CD8-positive, alpha-beta T cell (primary cell): ENCODE measurements at regions of chr18 and their contacts with region 1.

Region 1: GRCh38 chr18:37714691-37715090 is 149.1 kb upstream of the CELF4 start:
- DNase-seq: no peak
- ATAC-seq: no peak
- H3K4me3 ChIP-seq: no peak overlapping the region
- H3K4me3 Mint-ChIP-seq: no peak overlapping the region
- H3K27ac ChIP-seq: no peak overlapping the region
- H3K27ac Mint-ChIP-seq: no peak overlapping the region
- H3K4me1 ChIP-seq: no peaks in the 10 kb centered on the region
- H3K4me1 Mint-ChIP-seq: no peaks in the 10 kb centered on the region
- H3K27me3 ChIP-seq: no peaks in the 10 kb centered on the region
- H3K27me3 Mint-ChIP-seq: no peaks in the 10 kb centered on the region
- CTCF ChIP-seq: no peak

Region 2: GRCh38 chr18:37508207-37508606 is 206.5 kb before region 1 on chr18:
- CTCF ChIA-PET with region 1: no interaction called
- POLR2A ChIA-PET with region 1: no interaction called
- intact Hi-C with region 1: loop called in 1 of 2 experiments (anchors 5 kb)
- DNase-seq: no peak
- ATAC-seq: no peak
- H3K4me3 ChIP-seq: no peak overlapping the region
- H3K4me3 Mint-ChIP-seq: no peak overlapping the region
- H3K27ac ChIP-seq: no peak overlapping the region
- H3K27ac Mint-ChIP-seq: no peak overlapping the region
- H3K4me1 ChIP-seq: no peaks in the 10 kb centered on the region
- H3K4me1 Mint-ChIP-seq: no peaks in the 10 kb centered on the region
- H3K27me3 ChIP-seq: no peaks in the 10 kb centered on the region
- H3K27me3 Mint-ChIP-seq: no peaks in the 10 kb centered on the region
- CTCF ChIP-seq: no peak

Region 3: DNA sequence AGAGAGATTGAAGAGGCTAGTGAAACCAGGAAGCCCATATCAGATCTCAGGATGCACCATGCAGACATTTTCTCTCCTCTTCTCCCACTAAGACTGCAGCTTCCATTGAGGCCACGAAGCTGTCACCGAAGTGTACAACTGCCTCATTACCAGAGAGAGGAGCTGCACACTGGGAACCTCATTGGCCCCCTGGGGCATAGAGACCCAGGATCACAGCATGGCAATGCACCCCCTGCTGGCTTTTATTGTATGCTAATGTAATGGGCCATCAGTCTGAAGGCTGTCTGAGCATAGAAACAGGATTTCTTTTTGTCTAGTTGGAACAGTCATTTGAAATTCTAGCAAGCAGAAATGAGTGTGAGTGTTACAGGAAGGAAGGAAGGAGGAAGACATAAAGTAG is 712.5 kb after region 1 on chr18:
- CTCF ChIA-PET with region 1: no interaction called
- POLR2A ChIA-PET with region 1: no interaction called
- intact Hi-C with region 1: no loop called
- DNase-seq: no peak
- ATAC-seq: no peak
- H3K4me3 ChIP-seq: no peak overlapping the region
- H3K4me3 Mint-ChIP-seq: no peak overlapping the region
- H3K27ac ChIP-seq: no peak overlapping the region
- H3K27ac Mint-ChIP-seq: no peak overlapping the region
- H3K4me1 ChIP-seq: no peaks in the 10 kb centered on the region
- H3K4me1 Mint-ChIP-seq: no peaks in the 10 kb centered on the region
- H3K27me3 ChIP-seq: no peaks in the 10 kb centered on the region
- H3K27me3 Mint-ChIP-seq: no peaks in the 10 kb centered on the region
- CTCF ChIP-seq: no peak